ENCODE measurements at regions of chr2 and their contacts with region 1.

Region 1: GRCh38 chr2:134411828-134412638 is 158.2 kb downstream of the MGAT5 start:
- DNase-seq: peak; percentile 41 to 83 (median 68)
- ATAC-seq: peak; percentile 95
- H3K4me3 ChIP-seq: no peak overlapping the region
- H3K4me3 Mint-ChIP-seq: no peak overlapping the region
- H3K27ac ChIP-seq: no peak overlapping the region
- H3K27ac Mint-ChIP-seq: peak overlapping the region; percentile 19
- H3K4me1 ChIP-seq: peaks cover 6% of the 10 kb centered on the region
- H3K4me1 Mint-ChIP-seq: peaks cover 48% of the 10 kb centered on the region
- H3K27me3 ChIP-seq: no peaks in the 10 kb centered on the region
- H3K27me3 Mint-ChIP-seq: no peaks in the 10 kb centered on the region
- CTCF ChIP-seq: peak; percentile 67

Region 2: DNA sequence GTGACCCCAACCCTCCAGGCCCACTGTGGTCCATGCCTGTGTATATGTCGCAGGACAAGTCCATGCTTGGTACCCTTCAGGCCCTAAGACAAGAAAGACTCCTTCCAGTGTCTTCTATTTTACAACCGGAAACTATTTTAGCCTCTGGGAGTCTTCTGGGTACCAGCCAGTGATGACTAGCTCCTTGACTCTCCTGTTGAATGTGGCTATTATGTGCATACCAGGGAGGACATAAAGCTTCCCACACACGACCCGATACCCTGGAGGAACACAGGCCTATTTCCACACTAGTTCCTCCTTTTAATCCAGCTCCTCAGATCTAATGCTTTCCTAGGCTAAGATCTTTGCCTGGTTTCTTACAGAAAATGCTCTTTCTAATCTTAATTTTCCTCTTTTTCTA is 1021.9 kb before region 1 on chr2:
- CTCF ChIA-PET with region 1: no interaction called
- POLR2A ChIA-PET with region 1: no interaction called
- intact Hi-C with region 1: no loop called
- DNase-seq: no peak
- ATAC-seq: no peak
- H3K4me3 ChIP-seq: no peak overlapping the region
- H3K4me3 Mint-ChIP-seq: no peak overlapping the region
- H3K27ac ChIP-seq: no peak overlapping the region
- H3K27ac Mint-ChIP-seq: no peak overlapping the region
- H3K4me1 ChIP-seq: no peaks in the 10 kb centered on the region
- H3K4me1 Mint-ChIP-seq: no peaks in the 10 kb centered on the region
- H3K27me3 ChIP-seq: no peaks in the 10 kb centered on the region
- H3K27me3 Mint-ChIP-seq: peaks cover 2% of the 10 kb centered on the region
- CTCF ChIP-seq: no peak

Region 3: DNA sequence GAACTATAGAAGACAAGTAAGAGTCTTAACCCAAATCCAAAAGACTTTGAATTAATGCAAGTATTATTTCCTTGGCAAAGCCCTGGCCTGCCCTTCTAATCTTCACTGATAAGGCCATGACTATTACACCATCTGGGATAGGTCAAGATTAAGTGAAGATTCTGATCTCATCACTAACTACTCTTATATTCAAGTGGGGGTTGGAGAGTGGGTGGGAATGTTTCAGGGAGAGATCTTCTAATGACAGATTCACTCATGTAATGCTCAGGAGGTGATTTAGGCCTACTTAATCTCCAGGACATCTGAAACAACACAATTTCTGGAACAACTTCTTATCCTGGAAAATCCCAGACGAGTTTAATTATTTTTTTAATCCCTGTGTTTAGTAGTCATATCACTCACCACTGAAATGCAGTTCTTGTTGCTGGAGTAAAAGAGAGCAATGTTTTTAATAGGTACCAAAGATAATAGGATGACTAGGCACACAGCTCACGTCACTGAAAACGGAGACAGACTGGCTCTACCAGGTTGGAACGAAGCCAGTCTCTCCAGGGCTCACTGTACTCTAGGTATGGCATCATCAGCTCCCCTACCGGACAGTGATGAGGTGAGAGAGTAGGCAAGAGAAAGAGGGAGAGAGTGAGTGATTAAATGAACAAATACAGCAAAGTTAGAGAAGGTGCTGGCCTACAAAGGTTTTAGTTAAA is 976.9 kb before region 1 on chr2:
- CTCF ChIA-PET with region 1: no interaction called
- POLR2A ChIA-PET with region 1: no interaction called
- intact Hi-C with region 1: no loop called
- DNase-seq: no peak
- ATAC-seq: no peak
- H3K4me3 ChIP-seq: no peak overlapping the region
- H3K4me3 Mint-ChIP-seq: no peak overlapping the region
- H3K27ac ChIP-seq: no peak overlapping the region
- H3K27ac Mint-ChIP-seq: no peak overlapping the region
- H3K4me1 ChIP-seq: no peaks in the 10 kb centered on the region
- H3K4me1 Mint-ChIP-seq: no peaks in the 10 kb centered on the region
- H3K27me3 ChIP-seq: no peaks in the 10 kb centered on the region
- H3K27me3 Mint-ChIP-seq: no peaks in the 10 kb centered on the region
- CTCF ChIP-seq: no peak

Region 4: GRCh38 chr2:133886735-133887660 is 525.0 kb before region 1 on chr2:
- CTCF ChIA-PET with region 1: interaction called, 22 read pairs
- POLR2A ChIA-PET with region 1: no interaction called
- intact Hi-C with region 1: loop called (anchors 1 kb)
- DNase-seq: peak; percentile 4 to 61 (median 48)
- ATAC-seq: no peak
- H3K4me3 ChIP-seq: no peak overlapping the region
- H3K4me3 Mint-ChIP-seq: no peak overlapping the region
- H3K27ac ChIP-seq: no peak overlapping the region
- H3K27ac Mint-ChIP-seq: no peak overlapping the region
- H3K4me1 ChIP-seq: no peaks in the 10 kb centered on the region
- H3K4me1 Mint-ChIP-seq: peaks cover 2% of the 10 kb centered on the region
- H3K27me3 ChIP-seq: no peaks in the 10 kb centered on the region
- H3K27me3 Mint-ChIP-seq: peaks cover 4% of the 10 kb centered on the region
- CTCF ChIP-seq: peak; percentile 46

Region 5: GRCh38 chr2:134109725-134110124 is 302.3 kb before region 1 on chr2:
- CTCF ChIA-PET with region 1: interaction called, 12 read pairs
- POLR2A ChIA-PET with region 1: no interaction called
- intact Hi-C with region 1: no loop called
- DNase-seq: no peak
- ATAC-seq: no peak
- H3K4me3 ChIP-seq: no peak overlapping the region
- H3K4me3 Mint-ChIP-seq: no peak overlapping the region
- H3K27ac ChIP-seq: no peak overlapping the region
- H3K27ac Mint-ChIP-seq: no peak overlapping the region
- H3K4me1 ChIP-seq: peaks cover 1% of the 10 kb centered on the region
- H3K4me1 Mint-ChIP-seq: peaks cover 3% of the 10 kb centered on the region
- H3K27me3 ChIP-seq: no peaks in the 10 kb centered on the region
- H3K27me3 Mint-ChIP-seq: no peaks in the 10 kb centered on the region
- CTCF ChIP-seq: no peak

Region 6: GRCh38 chr2:134218930-134219658 is 192.9 kb before region 1 on chr2:
- CTCF ChIA-PET with region 1: interaction called, 10 read pairs
- POLR2A ChIA-PET with region 1: no interaction called
- intact Hi-C with region 1: no loop called
- DNase-seq: peak in 8 of 9 experiments; percentile 14 to 70 (median 56)
- ATAC-seq: peak; percentile 51
- H3K4me3 ChIP-seq: peak overlapping the region in 1 of 2 experiments; percentile 18
- H3K4me3 Mint-ChIP-seq: peak overlapping the region; percentile 72
- H3K27ac ChIP-seq: peak overlapping the region in 1 of 2 experiments; percentile 58
- H3K27ac Mint-ChIP-seq: peak overlapping the region; percentile 93
- H3K4me1 ChIP-seq: peaks cover 45% of the 10 kb centered on the region
- H3K4me1 Mint-ChIP-seq: peaks cover 68% of the 10 kb centered on the region
- H3K27me3 ChIP-seq: no peaks in the 10 kb centered on the region
- H3K27me3 Mint-ChIP-seq: no peaks in the 10 kb centered on the region
- CTCF ChIP-seq: no peak

Region 7: GRCh38 chr2:134301099-134301927 is 110.7 kb before region 1 on chr2:
- CTCF ChIA-PET with region 1: interaction called, 3 read pairs
- POLR2A ChIA-PET with region 1: no interaction called
- intact Hi-C with region 1: loop called in 1 of 2 experiments (anchors 5 kb)
- DNase-seq: no peak
- ATAC-seq: no peak
- H3K4me3 ChIP-seq: no peak overlapping the region
- H3K4me3 Mint-ChIP-seq: no peak overlapping the region
- H3K27ac ChIP-seq: no peak overlapping the region
- H3K27ac Mint-ChIP-seq: peak overlapping the region; percentile 25
- H3K4me1 ChIP-seq: peaks cover 17% of the 10 kb centered on the region
- H3K4me1 Mint-ChIP-seq: peaks cover 75% of the 10 kb centered on the region
- H3K27me3 ChIP-seq: no peaks in the 10 kb centered on the region
- H3K27me3 Mint-ChIP-seq: no peaks in the 10 kb centered on the region
- CTCF ChIP-seq: no peak

Region 8: GRCh38 chr2:134512734-134513464 is 100.9 kb after region 1 on chr2:
- CTCF ChIA-PET with region 1: no interaction called
- POLR2A ChIA-PET with region 1: no interaction called
- intact Hi-C with region 1: no loop called
- DNase-seq: no peak
- ATAC-seq: no peak
- H3K4me3 ChIP-seq: no peak overlapping the region
- H3K4me3 Mint-ChIP-seq: no peak overlapping the region
- H3K27ac ChIP-seq: no peak overlapping the region
- H3K27ac Mint-ChIP-seq: no peak overlapping the region
- H3K4me1 ChIP-seq: no peaks in the 10 kb centered on the region
- H3K4me1 Mint-ChIP-seq: peaks cover 3% of the 10 kb centered on the region
- H3K27me3 ChIP-seq: no peaks in the 10 kb centered on the region
- H3K27me3 Mint-ChIP-seq: peaks cover 2% of the 10 kb centered on the region
- CTCF ChIP-seq: no peak

Measured in CD8-positive, alpha-beta T cell (primary cell).